K562 (cell line): ENCODE measurements at regions of chr11 and their contacts with region 1.

Region 1: DNA sequence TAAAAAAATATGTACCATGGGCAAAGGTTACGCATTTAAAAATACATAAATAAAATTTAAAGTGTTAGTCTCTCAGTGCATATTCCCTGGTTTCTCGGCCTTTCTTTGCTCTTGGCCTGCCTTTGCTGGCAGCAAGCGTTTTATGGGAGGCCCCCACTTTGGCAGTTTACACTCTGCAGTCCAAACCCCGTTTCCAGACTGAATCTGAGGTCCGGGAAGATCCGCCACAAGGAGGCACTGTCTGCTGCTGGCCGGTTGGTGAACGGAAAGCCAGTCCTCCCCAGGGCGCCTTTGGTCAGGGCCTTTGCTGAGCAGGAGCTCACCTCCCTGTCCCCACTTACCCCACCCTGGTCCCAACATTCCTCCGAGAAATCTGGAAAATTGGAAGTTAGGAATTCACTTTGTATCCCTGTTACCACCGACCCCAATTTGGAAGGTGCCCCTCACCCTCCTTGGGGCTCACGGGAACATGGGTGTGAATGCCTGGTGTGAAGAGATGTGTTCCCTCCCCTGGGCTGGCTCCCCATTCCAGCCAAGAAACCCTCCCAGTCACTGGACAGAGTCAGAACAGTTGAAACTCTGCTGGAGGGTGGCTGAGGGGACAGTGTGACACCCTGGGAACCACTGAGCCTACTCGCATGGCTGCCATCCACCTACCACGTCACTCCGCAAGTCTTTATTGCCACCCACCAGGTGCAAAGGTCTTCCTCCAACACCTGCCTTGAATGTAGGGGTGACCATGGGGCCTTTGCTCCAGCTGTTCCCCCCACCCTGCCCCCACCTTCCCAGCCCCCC is 9.4 kb upstream of the SF1 start:
- DNase-seq: peak; percentile 71 to 85 (median 77)
- ATAC-seq: peak; percentile 98
- H3K4me3 ChIP-seq: no peak overlapping the region
- H3K27ac ChIP-seq: no peak overlapping the region
- H3K4me1 ChIP-seq: peaks cover 3 to 17% of the 10 kb centered on the region in 2 experiments; a peak in 4 of 5 replicates
- H3K27me3 ChIP-seq: no peaks in the 10 kb centered on the region
- CTCF ChIP-seq: peak; percentile 85 to 92 (median 91)
- EP300 ChIP-seq: no peak
- POLR2A ChIP-seq: no peak
- RAD21 ChIP-seq: peak; percentile 60 to 80

Region 2: DNA sequence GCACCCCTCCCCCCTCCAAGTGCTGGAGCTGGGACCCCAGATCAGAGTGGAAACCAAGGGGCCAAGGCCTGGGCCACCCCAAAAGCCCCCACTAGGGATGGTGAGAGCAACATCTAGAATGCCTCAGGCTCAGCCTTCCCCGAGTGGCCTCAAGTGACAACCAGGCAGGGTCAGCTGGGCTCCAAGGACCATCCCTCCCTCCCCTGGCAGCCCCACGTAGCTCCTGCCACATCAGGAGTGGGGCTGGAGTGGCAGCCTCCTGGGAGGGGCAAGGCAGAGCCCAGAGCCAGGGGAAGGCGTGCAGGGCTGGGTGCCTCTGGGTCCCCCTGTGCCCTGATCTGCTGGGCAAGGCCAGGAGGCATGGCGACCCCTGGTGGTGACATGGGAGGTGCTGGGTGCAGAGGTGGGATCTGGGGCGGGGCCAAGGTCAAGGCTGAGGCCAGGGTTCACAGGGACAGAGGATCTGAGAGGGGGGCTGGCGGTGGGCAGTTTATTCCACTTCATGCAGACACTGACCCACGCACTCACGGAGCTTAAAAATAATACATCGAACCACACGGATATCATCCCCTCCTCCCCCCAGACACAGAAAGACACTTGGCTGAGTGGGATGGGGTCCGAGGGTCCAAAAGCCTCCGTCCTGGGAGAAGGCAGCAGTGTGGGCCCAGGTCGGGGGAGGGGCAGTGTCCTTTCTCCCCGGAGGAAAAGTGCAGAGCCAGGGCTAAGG is 106.5 kb after region 1 on chr11:
- CTCF ChIA-PET with region 1: interaction called, 13 read pairs
- POLR2A ChIA-PET with region 1: no interaction called
- in situ Hi-C with region 1: loop called (anchors 5 kb)
- intact Hi-C with region 1: loop called (anchors 5 kb)
- DNase-seq: peak; percentile 84 to 91 (median 87)
- ATAC-seq: peak; percentile 93
- H3K4me3 ChIP-seq: no peak overlapping the region
- H3K27ac ChIP-seq: no peak overlapping the region; the same call in 2 of the 3 replicates
- H3K4me1 ChIP-seq: peaks cover 14 to 73% of the 10 kb centered on the region in 2 experiments; a peak in 4 of 5 replicates
- H3K27me3 ChIP-seq: no peaks in the 10 kb centered on the region
- CTCF ChIP-seq: peak; percentile 92 to 97 (median 95)
- EP300 ChIP-seq: no peak; the same call in 1 of the 2 replicates
- POLR2A ChIP-seq: no peak; the same call in 1 of the 2 replicates
- RAD21 ChIP-seq: peak; percentile 92 to 93